HepG2 (cell line): ENCODE measurements at regions of chr9 and their contacts with region 1.

Region 1: GRCh38 chr9:134778841-134779411 is 101.7 kb upstream of the FCN2 start:
- DNase-seq: peak; percentile 48
- ATAC-seq: peak; percentile 92
- H3K4me3 ChIP-seq: no peak overlapping the region
- H3K27ac ChIP-seq: no peak overlapping the region
- H3K4me1 ChIP-seq: no peaks in the 10 kb centered on the region
- H3K27me3 ChIP-seq: peaks cover 15 to 90% of the 10 kb centered on the region in 2 experiments; a peak in 4 of 5 replicates
- CTCF ChIP-seq: peak; percentile 78
- EP300 ChIP-seq: no peak
- POLR2A ChIP-seq: no peak
- RAD21 ChIP-seq: peak; percentile 53

Region 2: DNA sequence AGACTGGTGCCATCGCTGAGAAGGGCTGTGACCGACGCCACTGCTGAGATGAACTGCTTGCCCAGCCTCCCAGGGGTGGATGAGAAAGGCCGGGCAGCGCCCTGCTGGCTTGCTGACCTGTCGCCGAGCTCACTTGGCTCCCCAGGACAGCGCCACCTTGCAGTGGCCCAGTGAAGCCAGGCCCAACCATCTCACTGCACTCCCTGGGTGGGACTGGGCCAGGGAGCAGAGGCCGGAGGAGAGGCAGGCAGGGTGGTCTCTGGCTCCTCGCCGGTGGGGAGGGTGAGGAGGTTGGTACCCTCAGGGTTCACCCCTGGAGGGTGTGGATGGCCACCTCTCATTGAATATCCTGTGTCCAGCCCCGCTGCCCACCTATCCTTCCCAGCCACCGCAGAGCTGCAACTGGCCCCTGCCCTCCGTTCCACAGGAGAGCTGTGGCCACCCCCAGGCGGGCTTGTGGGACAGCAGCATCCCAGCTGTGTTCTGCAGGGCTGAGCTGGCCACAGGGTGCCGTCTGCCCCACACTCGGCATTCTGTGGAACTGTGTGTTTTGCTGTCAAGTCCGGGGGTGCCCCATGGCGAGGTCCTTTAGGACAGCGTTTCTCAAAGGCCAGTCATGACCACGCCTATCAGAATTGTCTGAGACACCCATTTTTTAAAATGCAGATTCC is 60.7 kb after region 1 on chr9:
- CTCF ChIA-PET with region 1: no interaction called
- POLR2A ChIA-PET with region 1: no interaction called
- in situ Hi-C with region 1: no loop called
- intact Hi-C with region 1: no loop called
- DNase-seq: no peak
- ATAC-seq: peak; percentile 78
- H3K4me3 ChIP-seq: no peak overlapping the region
- H3K27ac ChIP-seq: no peak overlapping the region
- H3K4me1 ChIP-seq: no peaks in the 10 kb centered on the region
- H3K27me3 ChIP-seq: peaks cover 17 to 89% of the 10 kb centered on the region in 2 experiments
- CTCF ChIP-seq: peak; percentile 48
- EP300 ChIP-seq: no peak
- POLR2A ChIP-seq: no peak
- RAD21 ChIP-seq: no peak

Region 3: GRCh38 chr9:135410831-135411473 is 632.0 kb after region 1 on chr9:
- CTCF ChIA-PET with region 1: interaction called, 11 read pairs
- POLR2A ChIA-PET with region 1: no interaction called
- in situ Hi-C with region 1: no loop called
- intact Hi-C with region 1: no loop called
- DNase-seq: peak; percentile 7
- ATAC-seq: peak; percentile 65
- H3K4me3 ChIP-seq: no peak overlapping the region
- H3K27ac ChIP-seq: no peak overlapping the region
- H3K4me1 ChIP-seq: no peaks in the 10 kb centered on the region
- H3K27me3 ChIP-seq: peaks cover 5 to 53% of the 10 kb centered on the region in 2 experiments
- CTCF ChIP-seq: peak; percentile 42
- EP300 ChIP-seq: no peak
- POLR2A ChIP-seq: no peak
- RAD21 ChIP-seq: no peak